ENCODE measurements at regions of chrX and their contacts with region 1.

Region 1: DNA sequence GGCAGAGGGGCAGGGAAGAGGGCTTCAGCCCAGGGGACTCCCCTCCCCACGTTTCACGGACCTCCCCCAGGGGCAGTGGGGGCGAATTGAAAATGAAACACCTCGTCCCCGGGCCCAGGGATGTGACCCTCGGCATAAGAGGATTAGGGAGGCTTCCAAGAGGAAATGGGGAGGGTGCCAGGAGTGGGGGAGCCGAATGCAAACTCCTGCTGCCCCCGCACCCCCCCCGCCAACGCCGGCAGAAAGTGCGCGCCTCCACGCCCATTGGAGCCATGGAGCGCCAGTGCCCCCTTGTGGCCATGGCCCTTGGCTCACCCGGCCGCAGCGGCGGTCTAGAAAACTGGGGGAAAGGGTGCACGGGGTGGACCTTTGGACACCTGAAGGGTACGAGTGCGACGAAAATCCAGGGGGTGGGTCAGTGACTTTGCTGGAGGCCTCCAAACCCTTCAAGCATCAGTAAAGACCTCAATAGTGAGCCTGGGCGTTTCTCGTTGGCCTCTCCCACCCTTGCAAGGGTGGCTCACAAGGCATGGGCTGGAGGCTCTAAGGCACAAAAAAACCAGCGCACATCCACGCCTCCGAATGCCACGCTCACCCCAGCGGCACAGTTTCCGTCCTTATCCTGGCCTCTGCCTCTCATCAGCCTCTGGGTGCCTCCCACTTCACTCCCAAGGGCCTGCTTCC is 120.8 kb upstream of the PJA1 start:
- DNase-seq: peak; percentile 81

Region 2: GRCh38 chrX:68822641-68823410 is 463.2 kb before region 1 on chrX:
- intact Hi-C with region 1: loop called (anchors 2 kb)
- DNase-seq: peak; percentile 71

Region 3: GRCh38 chrX:68929332-68930150 is 356.5 kb before region 1 on chrX:
- intact Hi-C with region 1: loop called (anchors 5 kb)
- DNase-seq: peak; percentile 79

Region 4: DNA sequence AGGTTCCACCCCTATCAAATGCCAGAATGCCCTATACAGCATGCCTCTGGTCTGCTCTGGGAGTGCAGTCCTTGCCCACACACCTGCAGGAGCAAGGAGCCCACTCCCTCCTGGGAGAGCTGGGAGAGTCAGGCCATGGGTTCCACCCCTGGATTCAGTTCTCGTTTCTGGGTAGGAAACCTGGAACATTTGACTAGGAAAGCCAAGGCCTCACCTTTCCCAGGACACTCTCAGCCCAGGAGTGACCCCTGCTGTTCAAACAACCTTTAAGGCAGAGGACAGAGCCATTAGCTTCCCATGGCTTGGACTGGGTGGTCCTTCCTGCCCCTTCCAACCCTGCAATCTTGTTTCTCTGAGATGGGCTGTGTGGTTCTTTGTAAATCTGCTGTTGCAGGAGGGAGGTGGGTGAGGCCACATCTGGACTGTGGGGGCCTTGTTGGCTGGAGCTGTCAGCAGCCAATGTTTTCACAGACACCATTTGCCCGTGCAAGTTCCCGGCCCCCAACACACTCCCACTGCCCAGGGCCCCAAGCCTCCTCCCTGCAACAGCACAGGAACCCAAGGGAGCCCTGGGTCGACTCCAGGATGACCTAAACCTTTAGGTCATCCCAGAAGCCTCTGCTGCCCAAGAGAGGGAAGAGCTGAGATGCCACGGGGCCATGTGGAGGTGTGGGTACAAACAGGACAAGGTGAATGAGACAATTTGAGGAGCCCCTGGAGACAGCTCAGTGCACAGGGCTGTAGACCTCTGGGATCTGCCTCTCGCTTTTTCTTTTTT is 225.2 kb before region 1 on chrX:
- intact Hi-C with region 1: loop called (anchors 10 kb)
- DNase-seq: peak; percentile 63

Region 5: GRCh38 chrX:69093960-69094871 is 191.8 kb before region 1 on chrX:
- intact Hi-C with region 1: loop called (anchors 10 kb)
- DNase-seq: no peak

Region 6: GRCh38 chrX:69158166-69158980 is 127.7 kb before region 1 on chrX:
- intact Hi-C with region 1: loop called (anchors 10 kb)
- DNase-seq: peak; percentile 73

Region 7: GRCh38 chrX:69222103-69223090 is 63.6 kb before region 1 on chrX:
- intact Hi-C with region 1: loop called (anchors 5 kb)
- DNase-seq: peak; percentile 77